ENCODE measurements at regions of chr15 and their contacts with region 1.

Region 1: GRCh38 chr15:44426975-44427755 is at the start of gene CTDSPL2:
- DNase-seq: peak; percentile 99
- total RNA-seq, gene CTDSPL2: 19.0 TPM

Region 2: DNA sequence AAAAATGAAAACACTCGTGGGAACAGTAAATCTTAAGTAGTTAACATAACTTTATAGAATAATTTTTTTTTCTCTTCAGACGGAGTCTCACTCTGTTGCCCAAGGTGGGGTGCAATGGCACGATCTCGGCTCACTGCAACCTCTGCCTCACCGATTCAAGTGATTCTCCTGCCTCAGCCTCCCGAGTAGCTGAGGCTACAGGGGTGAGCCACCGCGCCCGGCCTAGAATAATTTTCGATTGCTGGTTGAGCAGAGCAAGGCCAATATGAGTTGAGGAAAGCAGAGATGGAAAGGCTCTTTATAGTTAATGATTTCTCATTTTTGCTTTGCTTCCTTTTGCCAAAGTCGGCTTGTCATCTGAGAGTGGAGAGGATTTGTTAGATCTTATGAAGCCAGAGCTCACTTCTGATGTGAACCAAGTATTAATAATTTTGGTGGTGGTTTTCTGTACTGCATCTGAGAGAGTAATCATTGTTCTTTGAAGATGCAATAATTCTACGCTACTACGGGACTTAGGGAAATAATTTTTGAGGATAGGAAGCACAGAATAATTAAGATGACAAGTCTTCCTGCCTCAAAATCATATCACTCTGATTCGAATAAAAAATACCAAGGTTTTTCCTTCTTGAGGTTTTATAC is 140.2 kb before region 1 on chr15:
- intact Hi-C with region 1: loop called (anchors 5 kb)
- DNase-seq: no peak

Region 3: DNA sequence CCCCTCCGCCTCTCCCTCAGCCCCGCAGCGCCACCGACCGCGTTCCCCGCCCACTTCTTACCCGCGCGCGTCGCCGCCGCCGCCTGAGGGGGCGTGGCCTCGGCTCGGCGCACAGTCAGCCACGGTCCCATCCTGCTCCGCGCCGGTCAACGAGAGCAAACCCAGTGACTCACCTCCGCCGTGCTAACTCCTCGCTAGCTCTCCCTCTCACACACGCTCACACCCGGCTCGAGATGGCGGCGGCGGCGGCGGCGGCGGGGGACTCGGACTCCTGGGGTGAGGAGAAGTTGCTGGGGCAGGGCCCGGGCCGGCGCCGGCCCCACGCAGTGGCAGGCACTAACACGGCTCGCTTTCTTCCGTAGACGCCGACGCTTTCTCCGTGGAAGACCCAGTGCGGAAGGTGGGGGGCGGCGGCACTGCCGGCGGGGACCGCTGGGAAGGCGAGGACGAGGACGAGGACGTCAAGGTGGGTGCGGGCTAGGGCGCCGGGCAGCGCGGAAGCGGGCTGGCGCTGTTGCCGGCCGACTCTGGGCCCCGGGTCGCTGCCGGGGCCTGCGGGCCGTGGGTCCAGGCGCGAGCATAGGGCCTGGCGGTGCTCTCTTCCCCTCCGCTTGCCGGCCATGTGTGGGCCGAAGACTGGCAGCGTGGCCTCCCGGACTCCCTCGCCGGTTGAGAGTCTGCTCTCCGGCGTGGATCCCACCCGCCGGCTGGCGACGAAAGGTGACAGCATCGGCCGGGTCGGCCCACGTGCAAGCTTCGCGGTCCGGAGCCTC is 110.0 kb after region 1 on chr15 and contains the start of gene EIF3J:
- intact Hi-C with region 1: loop called (anchors 5 kb)
- DNase-seq: peak; percentile 98
- total RNA-seq, gene EIF3J: 78.4 TPM

Measured in cardiac septum (tissue), 1 donor.